ENCODE measurements at regions of chr20 and their contacts with region 1.

Region 1: DNA sequence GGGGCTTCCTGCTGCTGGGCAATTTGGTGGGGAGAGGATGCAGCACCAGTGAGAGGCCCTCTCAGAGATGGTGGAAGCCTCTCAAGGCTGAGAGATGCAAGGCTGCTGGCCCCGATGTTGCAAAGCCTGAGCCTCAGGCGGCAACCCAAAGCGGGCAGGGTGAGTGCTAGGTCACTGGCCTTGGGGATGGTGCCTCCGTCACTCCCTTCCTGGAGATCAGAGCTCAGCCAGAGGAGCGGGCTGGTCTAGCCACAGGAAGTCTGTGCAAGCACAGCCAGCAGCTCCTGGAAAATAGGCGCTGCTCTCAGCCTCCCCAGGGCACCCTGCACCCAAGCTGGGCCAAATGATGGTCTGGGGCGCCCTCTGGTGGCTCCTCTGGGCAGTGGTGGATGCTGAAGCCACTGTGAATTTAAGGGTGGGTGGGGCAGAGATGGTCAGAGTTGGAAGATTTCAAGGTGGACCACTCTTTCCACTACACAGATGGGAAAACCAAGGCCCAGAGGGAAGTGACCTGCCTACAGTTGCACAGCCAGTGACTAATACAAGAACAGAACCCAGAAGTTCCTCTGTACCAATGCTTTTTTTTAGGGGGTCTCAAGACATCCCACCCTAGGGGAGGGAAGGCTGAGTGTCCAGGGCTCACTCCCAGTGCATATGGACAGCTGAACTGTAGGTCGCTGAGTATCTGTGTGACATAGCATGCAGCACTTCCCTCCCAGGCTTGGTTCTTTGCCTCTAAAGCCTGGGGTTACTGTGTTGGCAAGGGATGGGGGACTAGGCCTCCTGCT is 20.8 kb downstream of the C20orf203 start:
- DNase-seq: peak; percentile 60 to 84
- ATAC-seq: peak; percentile 98

Region 2: DNA sequence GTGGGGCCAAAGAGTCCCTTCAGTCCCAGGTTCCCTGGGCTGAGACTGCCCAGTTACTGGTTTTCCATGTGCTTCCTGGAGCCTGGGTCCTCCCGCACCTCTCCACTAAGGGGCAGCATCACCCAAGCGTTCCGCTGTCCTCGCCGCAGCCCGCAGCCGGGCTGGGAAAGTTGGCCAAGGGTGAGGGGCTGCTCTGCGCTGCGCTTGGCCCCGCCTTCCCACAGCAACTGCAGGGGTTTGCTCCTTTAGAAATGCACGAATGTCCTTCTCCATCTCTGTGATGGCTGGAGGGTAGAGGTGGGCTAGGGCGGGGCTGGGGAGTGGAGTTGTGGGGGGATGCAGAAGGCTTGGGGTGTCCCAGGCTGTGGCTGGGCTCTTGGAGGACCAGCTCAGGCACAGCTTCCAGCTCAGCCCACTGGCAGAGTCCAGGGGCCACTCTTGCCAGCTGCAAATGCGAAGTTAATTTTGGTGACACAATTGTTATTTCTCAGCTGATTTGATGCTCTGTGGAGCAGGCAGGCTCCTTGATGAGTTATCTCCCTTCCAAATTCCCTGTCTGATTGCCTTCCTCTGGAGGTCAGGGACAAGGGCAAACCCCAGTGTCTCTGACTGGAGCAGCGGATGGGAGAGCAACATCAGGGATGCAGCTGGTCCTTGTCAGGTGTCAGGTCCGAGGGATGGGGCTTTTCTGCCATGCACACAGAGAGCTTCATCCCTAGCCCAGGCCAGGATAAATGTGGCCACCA is 131.0 kb before region 1 on chr20:
- intact Hi-C with region 1: loop called (anchors 5 kb)
- DNase-seq: peak in 1 of 2 donors; percentile 76
- ATAC-seq: peak; percentile 96